Activated naive CD4-positive, alpha-beta T cell treated with anti-CD3 and anti-CD28 coated beads for 36 hours (primary cell): ENCODE measurements at regions of chr3 and their contacts with region 1.

Region 1: GRCh38 chr3:188792793-188793192 is 379.0 kb upstream of the TPRG1 start:
- DNase-seq: no peak
- H3K4me3 Mint-ChIP-seq: no peak overlapping the region
- H3K27ac Mint-ChIP-seq: no peak overlapping the region
- H3K4me1 Mint-ChIP-seq: peaks cover 3% of the 10 kb centered on the region
- H3K27me3 Mint-ChIP-seq: no peaks in the 10 kb centered on the region

Region 2: GRCh38 chr3:187770224-187770623 is 1022.6 kb before region 1 on chr3:
- CTCF ChIA-PET with region 1: no interaction called
- intact Hi-C with region 1: loop called (anchors 1 kb)
- DNase-seq: peak; percentile 73
- H3K4me3 Mint-ChIP-seq: no peak overlapping the region
- H3K27ac Mint-ChIP-seq: peak overlapping the region; percentile 82
- H3K4me1 Mint-ChIP-seq: peaks cover 38% of the 10 kb centered on the region
- H3K27me3 Mint-ChIP-seq: no peaks in the 10 kb centered on the region

Region 3: GRCh38 chr3:188286087-188286513 is 506.7 kb before region 1 on chr3:
- CTCF ChIA-PET with region 1: no interaction called
- intact Hi-C with region 1: loop called (anchors 1 kb)
- DNase-seq: peak; percentile 32
- H3K4me3 Mint-ChIP-seq: no peak overlapping the region
- H3K27ac Mint-ChIP-seq: no peak overlapping the region
- H3K4me1 Mint-ChIP-seq: peaks cover 45% of the 10 kb centered on the region
- H3K27me3 Mint-ChIP-seq: no peaks in the 10 kb centered on the region

Region 4: DNA sequence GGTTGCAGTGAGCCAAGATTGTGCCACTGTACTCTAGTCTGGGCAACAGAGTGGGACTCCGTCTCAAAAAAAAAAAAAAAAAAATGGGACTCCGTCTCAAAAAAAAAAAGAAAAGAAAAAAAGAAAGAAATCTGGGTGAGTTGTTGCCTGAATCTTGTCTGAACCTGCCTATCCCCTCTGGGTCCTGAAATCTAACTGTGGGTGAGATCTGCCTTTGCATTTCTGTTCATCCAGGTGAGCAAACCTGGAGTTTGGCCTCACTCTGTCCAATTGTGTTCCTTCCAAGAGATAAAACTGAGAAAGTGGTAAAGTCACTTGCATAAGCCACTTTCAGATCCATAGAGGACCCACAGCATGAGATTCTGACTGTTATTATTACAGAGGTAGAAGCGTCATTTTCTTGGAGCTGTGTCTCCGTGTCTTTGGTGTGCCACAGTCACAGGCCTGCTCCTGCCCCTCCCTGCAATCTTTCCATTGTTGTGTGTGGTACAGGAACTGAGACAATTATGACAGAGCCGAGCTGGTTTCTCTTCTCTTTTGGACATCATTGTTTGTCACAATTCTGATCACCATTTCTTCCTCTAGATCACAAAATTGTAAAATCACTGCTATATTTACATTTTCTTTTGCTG is 403.0 kb before region 1 on chr3:
- CTCF ChIA-PET with region 1: no interaction called
- intact Hi-C with region 1: loop called (anchors 1 kb)
- DNase-seq: peak; percentile 85
- H3K4me3 Mint-ChIP-seq: no peak overlapping the region
- H3K27ac Mint-ChIP-seq: peak overlapping the region; percentile 67
- H3K4me1 Mint-ChIP-seq: peaks cover 39% of the 10 kb centered on the region
- H3K27me3 Mint-ChIP-seq: no peaks in the 10 kb centered on the region

Region 5: GRCh38 chr3:188673646-188674186 is 119.1 kb before region 1 on chr3:
- CTCF ChIA-PET with region 1: no interaction called
- intact Hi-C with region 1: no loop called
- DNase-seq: no peak
- H3K4me3 Mint-ChIP-seq: no peak overlapping the region
- H3K27ac Mint-ChIP-seq: no peak overlapping the region
- H3K4me1 Mint-ChIP-seq: peaks cover 25% of the 10 kb centered on the region
- H3K27me3 Mint-ChIP-seq: no peaks in the 10 kb centered on the region

Region 6: GRCh38 chr3:188700501-188700900 is 92.3 kb before region 1 on chr3:
- CTCF ChIA-PET with region 1: interaction called, 3 read pairs
- intact Hi-C with region 1: loop called (anchors 1 kb)
- DNase-seq: peak; percentile 52
- H3K4me3 Mint-ChIP-seq: no peak overlapping the region
- H3K27ac Mint-ChIP-seq: no peak overlapping the region
- H3K4me1 Mint-ChIP-seq: peaks cover 30% of the 10 kb centered on the region
- H3K27me3 Mint-ChIP-seq: no peaks in the 10 kb centered on the region

Region 7: DNA sequence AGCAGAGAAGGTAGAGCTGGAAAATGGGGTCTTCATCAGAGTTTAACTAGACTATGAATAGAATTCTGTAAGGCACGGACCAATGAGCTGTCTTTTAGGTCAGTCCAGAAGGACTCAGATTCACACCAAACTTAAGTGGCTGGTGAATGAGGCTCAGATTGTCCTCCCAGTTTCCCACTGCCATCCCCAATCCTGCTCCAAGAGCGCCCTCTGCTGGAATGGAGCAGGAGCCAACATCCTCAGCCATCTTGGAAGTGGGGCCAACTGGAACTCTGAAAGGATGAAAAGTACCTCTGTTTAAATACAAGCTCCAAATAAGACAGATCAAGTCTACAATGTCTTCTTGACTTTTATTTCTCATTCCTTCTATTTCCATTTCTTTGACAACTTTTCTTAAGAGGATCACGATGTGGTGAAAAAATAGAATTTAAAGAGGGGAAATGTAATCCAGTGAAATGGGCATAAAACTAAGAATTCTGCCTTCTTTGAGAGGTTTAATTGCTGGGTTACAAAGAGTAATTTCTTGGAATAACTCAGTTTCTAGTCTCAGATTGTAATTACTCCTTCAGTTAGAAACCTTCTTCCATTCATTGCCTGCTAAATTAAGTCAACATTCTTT is 161.9 kb after region 1 on chr3:
- CTCF ChIA-PET with region 1: interaction called, 20 read pairs
- intact Hi-C with region 1: loop called (anchors 1 kb)
- DNase-seq: peak; percentile 91
- H3K4me3 Mint-ChIP-seq: no peak overlapping the region
- H3K27ac Mint-ChIP-seq: no peak overlapping the region
- H3K4me1 Mint-ChIP-seq: peaks cover 39% of the 10 kb centered on the region
- H3K27me3 Mint-ChIP-seq: no peaks in the 10 kb centered on the region

Region 8: DNA sequence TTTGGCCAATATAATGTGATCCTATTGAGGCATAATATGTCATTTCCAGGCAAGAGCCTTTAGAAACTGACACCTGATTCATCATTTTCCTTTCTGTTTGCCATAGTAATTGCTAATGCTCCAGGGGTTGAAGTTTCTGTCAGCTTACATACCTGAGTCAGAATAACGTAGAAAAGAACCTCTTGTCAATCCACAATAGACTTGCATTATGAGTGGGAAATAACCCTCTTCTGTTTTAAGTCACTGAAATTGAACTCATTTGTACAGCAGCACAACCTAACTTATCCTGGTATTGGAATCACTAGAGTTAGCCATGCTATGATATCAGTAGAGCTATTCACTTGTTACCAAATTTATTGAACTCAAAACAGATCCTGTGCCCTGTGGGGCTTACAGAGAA is 736.7 kb after region 1 on chr3:
- CTCF ChIA-PET with region 1: no interaction called
- intact Hi-C with region 1: loop called (anchors 1 kb)
- DNase-seq: no peak
- H3K4me3 Mint-ChIP-seq: no peak overlapping the region
- H3K27ac Mint-ChIP-seq: peak overlapping the region; percentile 74
- H3K4me1 Mint-ChIP-seq: peaks cover 46% of the 10 kb centered on the region
- H3K27me3 Mint-ChIP-seq: no peaks in the 10 kb centered on the region